ENCODE measurements at regions of chr12 and their contacts with region 1.

Region 1: DNA sequence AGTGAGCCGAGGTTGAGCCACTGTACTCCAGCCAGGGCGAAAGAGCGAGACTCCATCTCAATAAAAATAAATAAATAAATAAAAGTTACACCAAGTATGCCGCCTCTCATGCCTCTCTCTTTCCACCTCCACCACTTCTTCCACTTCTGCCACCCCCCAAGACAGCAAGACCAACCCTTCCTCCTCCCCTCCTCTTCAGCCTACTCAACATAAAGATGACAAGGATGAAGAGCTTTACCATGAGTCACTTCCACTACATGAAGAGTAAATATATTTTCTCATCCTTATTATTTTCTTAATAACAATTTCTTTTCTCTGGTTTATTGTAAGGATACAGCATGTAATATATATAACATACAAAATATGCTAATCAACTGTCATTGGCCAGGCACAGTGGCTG is 3.6 kb upstream of the TMED2 start:
- DNase-seq: no peak

Region 2: GRCh38 chr12:123271001-123271729 is 309.6 kb before region 1 on chr12:
- intact Hi-C with region 1: loop called (anchors 1 kb)
- DNase-seq: peak; percentile 63 to 96 (median 76)

Region 3: DNA sequence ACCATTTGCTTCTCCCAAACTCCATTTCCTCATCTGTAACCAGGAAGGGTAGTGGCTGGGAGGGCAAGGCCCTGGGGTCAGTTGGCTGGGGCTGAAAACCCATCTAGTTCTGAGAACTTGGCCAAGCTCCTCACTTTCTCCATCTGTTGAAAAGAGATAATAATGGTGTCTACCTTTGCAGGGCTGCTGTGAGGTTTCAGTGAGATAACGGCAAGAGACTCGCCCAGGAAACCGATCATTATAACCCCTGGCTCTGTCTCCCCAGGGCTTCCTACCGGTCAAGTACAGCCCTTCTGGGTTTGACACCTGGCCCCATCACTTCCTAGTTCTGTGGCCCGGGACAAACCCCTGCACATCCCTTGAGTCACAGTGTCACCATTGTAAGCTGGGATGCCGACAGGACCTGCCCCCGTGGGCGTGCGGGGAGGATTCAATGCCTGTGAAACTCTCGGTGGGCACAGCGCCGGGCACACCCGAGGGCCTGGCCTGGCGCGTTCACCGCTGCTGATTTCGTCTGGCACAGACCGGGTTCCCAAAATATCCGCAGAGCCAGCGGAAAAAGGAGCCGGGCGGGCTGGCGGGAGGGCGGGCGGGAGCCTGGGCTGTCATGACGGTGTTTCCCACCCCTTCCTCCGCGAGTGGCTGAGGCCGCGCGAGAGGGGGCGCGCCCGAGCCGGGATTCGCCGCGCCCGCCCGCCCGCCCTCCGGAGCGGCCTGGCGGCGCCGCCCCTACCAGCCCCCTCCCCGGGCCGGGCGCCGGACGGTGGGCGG is 192.4 kb before region 1 on chr12:
- intact Hi-C with region 1: loop called (anchors 2 kb)
- DNase-seq: peak; percentile 67 to 96 (median 76)

Region 4: GRCh38 chr12:123457980-123458783 is 122.6 kb before region 1 on chr12 and contains the start of gene SNRNP35:
- intact Hi-C with region 1: loop called (anchors 5 kb)
- DNase-seq: peak; percentile 75 to 97 (median 80)

Region 5: GRCh38 chr12:123533672-123534643 is 46.8 kb before region 1 on chr12 and contains the start of gene RILPL1:
- intact Hi-C with region 1: loop called (anchors 5 kb)
- DNase-seq: peak; percentile 40 to 93 (median 52)

Measured in posterior cingulate gyrus (tissue), 11 donors.